WTC11 (cell line): ENCODE measurements at regions of chr4 and their contacts with region 1.

Region 1: GRCh38 chr4:83753260-83753659 is 217.4 kb downstream of the GPAT3 start:
- DNase-seq: no peak
- ATAC-seq: peak; percentile 69
- H3K4me3 Mint-ChIP-seq: no peak overlapping the region
- H3K27ac Mint-ChIP-seq: no peak overlapping the region
- H3K4me1 Mint-ChIP-seq: no peaks in the 10 kb centered on the region
- H3K27me3 Mint-ChIP-seq: no peaks in the 10 kb centered on the region
- CTCF ChIP-seq: no peak

Region 2: GRCh38 chr4:83644677-83645659 is 108.3 kb before region 1 on chr4:
- CTCF ChIA-PET with region 1: interaction called, 12 read pairs
- POLR2A ChIA-PET with region 1: no interaction called
- DNase-seq: no peak
- ATAC-seq: peak; percentile 61
- H3K4me3 Mint-ChIP-seq: no peak overlapping the region
- H3K27ac Mint-ChIP-seq: no peak overlapping the region
- H3K4me1 Mint-ChIP-seq: peaks cover 11% of the 10 kb centered on the region
- H3K27me3 Mint-ChIP-seq: no peaks in the 10 kb centered on the region; the same call in 1 of the 2 replicates
- CTCF ChIP-seq: peak; percentile 82

Region 3: GRCh38 chr4:83768146-83768545 is 14.9 kb after region 1 on chr4:
- CTCF ChIA-PET with region 1: interaction called, 17 read pairs
- POLR2A ChIA-PET with region 1: no interaction called
- DNase-seq: no peak
- ATAC-seq: no peak
- H3K4me3 Mint-ChIP-seq: no peak overlapping the region
- H3K27ac Mint-ChIP-seq: no peak overlapping the region
- H3K4me1 Mint-ChIP-seq: peaks cover 20% of the 10 kb centered on the region
- H3K27me3 Mint-ChIP-seq: no peaks in the 10 kb centered on the region
- CTCF ChIP-seq: no peak